Vagina (tissue), 2 donors: ENCODE measurements at regions of chr20 and their contacts with region 1.

Region 1: GRCh38 chr20:38113401-38114325 is 51.4 kb downstream of the TGM2 start:
- DNase-seq: peak; percentile 77 to 79
- H3K4me3 ChIP-seq: no peak overlapping the region
- H3K27ac ChIP-seq: no peak overlapping the region
- H3K4me1 ChIP-seq: peaks cover 28% of the 10 kb centered on the region
- H3K27me3 ChIP-seq: no peaks in the 10 kb centered on the region
- CTCF ChIP-seq: no peak
- POLR2A ChIP-seq: no peak

Region 2: DNA sequence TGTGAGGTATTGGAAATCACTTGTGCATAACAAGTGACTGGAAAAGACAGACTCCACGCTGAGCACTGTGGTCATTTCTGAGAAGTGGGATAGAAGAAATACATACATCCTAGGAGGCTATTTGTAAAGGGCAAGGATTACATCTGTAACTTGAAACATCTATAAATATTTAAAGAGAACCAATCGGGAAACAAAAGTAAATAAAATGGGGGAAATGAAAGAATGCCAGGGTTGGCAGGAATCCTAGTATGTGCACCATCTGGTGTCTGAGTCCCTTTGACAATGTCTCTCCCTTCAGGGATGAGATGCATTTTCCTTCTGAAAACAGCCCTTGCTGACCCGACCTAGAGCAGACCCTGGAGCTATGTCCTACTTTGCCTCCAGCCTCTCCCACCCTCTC is 157.6 kb before region 1 on chr20:
- intact Hi-C with region 1: no loop called
- DNase-seq: no peak
- H3K4me3 ChIP-seq: no peak overlapping the region
- H3K27ac ChIP-seq: no peak overlapping the region
- H3K4me1 ChIP-seq: no peaks in the 10 kb centered on the region
- H3K27me3 ChIP-seq: no peaks in the 10 kb centered on the region
- CTCF ChIP-seq: no peak
- POLR2A ChIP-seq: no peak

Region 3: GRCh38 chr20:38073307-38074071 is 40.2 kb before region 1 on chr20:
- intact Hi-C with region 1: loop called (anchors 5 kb)
- DNase-seq: no peak
- H3K4me3 ChIP-seq: no peak overlapping the region
- H3K27ac ChIP-seq: peak overlapping the region; percentile 51
- H3K4me1 ChIP-seq: peaks cover 32% of the 10 kb centered on the region
- H3K27me3 ChIP-seq: no peaks in the 10 kb centered on the region
- CTCF ChIP-seq: peak; percentile 53 to 67 (median 58)
- POLR2A ChIP-seq: no peak

Region 4: GRCh38 chr20:38349856-38350255 is 236.2 kb after region 1 on chr20:
- intact Hi-C with region 1: loop called (anchors 2 kb)
- DNase-seq: no peak
- H3K4me3 ChIP-seq: no peak overlapping the region
- H3K27ac ChIP-seq: no peak overlapping the region
- H3K4me1 ChIP-seq: no peaks in the 10 kb centered on the region
- H3K27me3 ChIP-seq: no peaks in the 10 kb centered on the region
- CTCF ChIP-seq: no peak
- POLR2A ChIP-seq: no peak